ENCODE measurements at regions of chr20 and their contacts with region 1.

Region 1: GRCh38 chr20:36605399-36606157 is at the start of gene RAB5IF:
- DNase-seq: peak; percentile 99
- H3K4me3 ChIP-seq: peak within 1 kb of the TSS; percentile 43 to 96 (median 91)
- H3K27ac ChIP-seq: peak within 1 kb of the TSS; percentile 44
- H3K4me1 ChIP-seq: peaks cover 19% of the 10 kb centered on the region
- H3K27me3 ChIP-seq: no peaks in the 10 kb centered on the region
- CTCF ChIP-seq: peak; percentile 96 to 99
- POLR2A ChIP-seq: peak; percentile 87
- total RNA-seq, gene RAB5IF: 109 and 113 TPM in 2 replicates

Region 2: DNA sequence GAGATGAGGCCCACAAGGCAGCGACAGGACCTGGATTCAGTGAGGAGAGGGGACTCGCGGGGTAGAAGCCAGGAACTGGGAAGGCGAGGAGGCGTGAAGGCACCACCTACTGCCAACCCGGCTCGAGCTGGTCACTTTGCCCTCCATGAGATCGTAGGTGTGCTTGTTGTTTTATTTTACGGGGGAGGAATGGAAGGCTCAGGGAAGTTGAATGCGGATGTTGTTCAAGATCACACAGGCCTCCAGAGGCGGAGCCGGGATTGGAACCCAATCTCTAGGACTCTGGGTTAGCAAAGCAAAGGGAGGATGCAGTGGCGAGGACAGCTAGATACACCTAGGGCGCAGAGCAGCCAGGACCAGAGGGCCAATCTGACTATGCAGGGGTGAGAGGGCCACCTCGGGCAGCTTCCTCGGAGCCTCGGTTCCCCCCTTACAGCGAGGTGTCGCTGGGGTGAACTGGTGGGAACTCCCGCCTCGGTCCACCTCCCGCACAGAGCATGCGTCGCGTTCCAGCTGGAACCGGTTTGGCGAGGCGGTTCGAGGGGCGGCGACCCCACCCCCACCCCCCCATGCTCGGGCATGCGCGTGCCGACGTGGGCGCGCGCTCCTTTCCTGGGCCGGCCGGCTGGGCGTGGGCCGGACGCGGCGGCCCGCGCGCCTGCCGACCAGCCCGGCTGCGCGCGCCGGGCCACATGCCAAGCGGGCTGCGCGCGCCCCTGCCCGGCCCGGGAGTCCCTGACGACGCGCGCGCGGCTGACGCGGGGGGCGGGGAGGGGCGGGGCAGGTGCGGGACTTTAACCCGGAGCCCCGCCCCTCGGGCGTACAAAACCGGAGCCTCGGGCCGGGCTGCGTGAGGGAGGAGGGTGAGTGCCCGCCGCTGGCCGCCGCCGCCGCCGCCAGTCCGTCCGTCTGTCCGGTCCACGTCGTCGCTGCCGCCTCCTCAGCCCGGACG is 144.7 kb before region 1 on chr20:
- CTCF ChIA-PET with region 1: interaction called, 5 read pairs
- POLR2A ChIA-PET with region 1: no interaction called
- dilution Hi-C with region 1: no loop called
- intact Hi-C with region 1: loop called (anchors 5 kb)
- DNase-seq: peak; percentile 85
- H3K4me3 ChIP-seq: peak overlapping the region in 1 of 3 experiments; percentile 74
- H3K27ac ChIP-seq: peak overlapping the region; percentile 2
- H3K4me1 ChIP-seq: peaks cover 28% of the 10 kb centered on the region
- H3K27me3 ChIP-seq: no peaks in the 10 kb centered on the region
- CTCF ChIP-seq: no peak
- POLR2A ChIP-seq: peak; percentile 79

Region 3: GRCh38 chr20:36541227-36541763 is 64.3 kb before region 1 on chr20 and contains the start of gene MYL9:
- CTCF ChIA-PET with region 1: interaction called, 5 read pairs
- POLR2A ChIA-PET with region 1: interaction called, 3 read pairs
- dilution Hi-C with region 1: no loop called
- intact Hi-C with region 1: loop called (anchors 1 kb)
- DNase-seq: peak; percentile 43
- H3K4me3 ChIP-seq: peak within 1 kb of the TSS; percentile 26 to 77 (median 55)
- H3K27ac ChIP-seq: peak within 1 kb of the TSS; percentile 53
- H3K4me1 ChIP-seq: peaks cover 11% of the 10 kb centered on the region
- H3K27me3 ChIP-seq: no peaks in the 10 kb centered on the region
- CTCF ChIP-seq: no peak
- POLR2A ChIP-seq: peak; percentile 49
- total RNA-seq, gene MYL9: 90.4 and 116 TPM in 2 replicates

Region 4: GRCh38 chr20:36550797-36551299 is 54.7 kb before region 1 on chr20:
- CTCF ChIA-PET with region 1: interaction called, 5 read pairs
- POLR2A ChIA-PET with region 1: no interaction called
- dilution Hi-C with region 1: no loop called
- intact Hi-C with region 1: loop called (anchors 1 kb)
- DNase-seq: no peak
- H3K4me3 ChIP-seq: no peak overlapping the region
- H3K27ac ChIP-seq: no peak overlapping the region
- H3K4me1 ChIP-seq: no peaks in the 10 kb centered on the region
- H3K27me3 ChIP-seq: no peaks in the 10 kb centered on the region
- CTCF ChIP-seq: no peak
- POLR2A ChIP-seq: no peak

Region 5: DNA sequence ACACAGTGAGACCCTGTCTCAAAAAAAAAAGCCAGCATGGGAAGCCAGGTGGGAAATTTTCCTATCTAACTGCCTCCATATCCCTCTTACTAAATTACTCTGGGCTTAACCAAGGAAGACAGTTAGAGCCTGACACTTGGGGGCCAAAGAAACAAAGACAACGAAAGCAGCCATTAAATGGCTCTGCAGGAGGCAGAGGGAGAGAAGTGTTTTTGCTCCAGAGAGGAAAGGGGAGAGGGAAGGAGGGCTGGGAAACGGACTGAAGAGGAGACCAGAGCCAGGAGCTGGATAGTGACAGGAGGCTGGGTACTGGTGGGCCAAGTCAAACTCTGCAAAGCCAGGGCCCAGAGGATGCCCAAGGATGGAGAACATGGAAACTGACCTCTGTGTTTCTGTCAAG is 42.9 kb before region 1 on chr20:
- CTCF ChIA-PET with region 1: interaction called, 23 read pairs
- POLR2A ChIA-PET with region 1: interaction called, 6 read pairs
- dilution Hi-C with region 1: no loop called
- intact Hi-C with region 1: no loop called
- DNase-seq: no peak
- H3K4me3 ChIP-seq: no peak overlapping the region
- H3K27ac ChIP-seq: no peak overlapping the region
- H3K4me1 ChIP-seq: no peaks in the 10 kb centered on the region
- H3K27me3 ChIP-seq: no peaks in the 10 kb centered on the region
- CTCF ChIP-seq: no peak
- POLR2A ChIP-seq: no peak

Region 6: DNA sequence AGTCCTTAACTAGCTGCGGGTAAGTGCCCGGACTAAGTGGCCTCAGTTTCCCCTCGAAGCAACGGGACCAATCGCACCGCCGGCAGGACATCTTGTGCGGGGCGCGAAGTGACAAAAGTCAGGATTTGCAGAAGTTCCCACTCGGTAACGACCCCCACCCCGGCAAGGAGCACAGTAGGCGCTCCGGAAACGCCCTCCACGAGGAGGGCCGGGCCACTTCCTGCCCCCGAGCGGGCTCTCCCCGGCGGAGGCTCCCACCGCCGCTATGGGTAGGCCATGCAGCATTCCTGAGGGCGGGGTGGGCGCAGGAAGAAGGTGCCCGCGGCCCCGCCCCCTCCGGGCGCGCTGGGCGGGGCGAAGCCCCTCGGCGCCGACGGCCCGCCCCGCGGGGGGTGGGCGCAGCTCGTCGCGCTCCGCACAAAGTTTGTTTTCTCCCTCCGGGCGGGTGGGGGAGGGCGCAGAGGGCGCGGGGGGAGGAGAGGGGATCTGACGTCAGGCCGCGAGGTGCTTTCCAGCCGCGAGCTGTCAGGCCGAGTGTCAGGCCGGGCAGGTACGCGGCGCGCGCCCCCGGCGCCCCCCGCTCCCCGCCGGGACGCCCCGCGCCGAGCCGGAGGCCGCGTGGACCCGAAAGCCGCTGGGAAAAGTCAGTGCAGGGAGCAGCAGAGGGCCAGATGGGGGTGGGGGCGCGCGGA is 32.3 kb before region 1 on chr20 and contains the start of gene TGIF2:
- CTCF ChIA-PET with region 1: interaction called, 14 read pairs
- POLR2A ChIA-PET with region 1: interaction called, 3 read pairs
- dilution Hi-C with region 1: no loop called
- intact Hi-C with region 1: loop called (anchors 1 kb)
- DNase-seq: peak; percentile 84
- H3K4me3 ChIP-seq: peak within 1 kb of the TSS; percentile 55 to 87 (median 85)
- H3K27ac ChIP-seq: peak within 1 kb of the TSS; percentile 71
- H3K4me1 ChIP-seq: peaks cover 24% of the 10 kb centered on the region
- H3K27me3 ChIP-seq: no peaks in the 10 kb centered on the region
- CTCF ChIP-seq: no peak
- POLR2A ChIP-seq: peak; percentile 78
- total RNA-seq, gene TGIF2: 21.0 and 27.9 TPM in 2 replicates

Region 7: GRCh38 chr20:36688630-36689029 is 83.1 kb after region 1 on chr20:
- CTCF ChIA-PET with region 1: no interaction called
- POLR2A ChIA-PET with region 1: no interaction called
- dilution Hi-C with region 1: no loop called
- intact Hi-C with region 1: no loop called
- DNase-seq: no peak
- H3K4me3 ChIP-seq: no peak overlapping the region
- H3K27ac ChIP-seq: no peak overlapping the region
- H3K4me1 ChIP-seq: no peaks in the 10 kb centered on the region
- H3K27me3 ChIP-seq: no peaks in the 10 kb centered on the region
- CTCF ChIP-seq: no peak
- POLR2A ChIP-seq: no peak

Region 8: GRCh38 chr20:37090407-37090806 is 484.8 kb after region 1 on chr20:
- CTCF ChIA-PET with region 1: no interaction called
- POLR2A ChIA-PET with region 1: no interaction called
- dilution Hi-C with region 1: no loop called
- intact Hi-C with region 1: no loop called
- DNase-seq: no peak
- H3K4me3 ChIP-seq: no peak overlapping the region
- H3K27ac ChIP-seq: no peak overlapping the region
- H3K4me1 ChIP-seq: peaks cover 9% of the 10 kb centered on the region
- H3K27me3 ChIP-seq: no peaks in the 10 kb centered on the region
- CTCF ChIP-seq: no peak
- POLR2A ChIP-seq: no peak

Region 9: GRCh38 chr20:37123441-37123840 is 517.9 kb after region 1 on chr20:
- CTCF ChIA-PET with region 1: no interaction called
- POLR2A ChIA-PET with region 1: no interaction called
- dilution Hi-C with region 1: no loop called
- intact Hi-C with region 1: no loop called
- DNase-seq: no peak
- H3K4me3 ChIP-seq: no peak overlapping the region
- H3K27ac ChIP-seq: no peak overlapping the region
- H3K4me1 ChIP-seq: no peaks in the 10 kb centered on the region
- H3K27me3 ChIP-seq: peaks cover 0 to 1% of the 10 kb centered on the region in 2 experiments
- CTCF ChIP-seq: no peak
- POLR2A ChIP-seq: no peak

Measured in endothelial cell of umbilical vein (primary cell).